Mammary epithelial cell (primary cell): ENCODE measurements at regions of chr20 and their contacts with region 1.

Region 1: GRCh38 chr20:23257848-23258746 is 92.5 kb upstream of the NXT1 start:
- DNase-seq: peak; percentile 78
- H3K4me3 ChIP-seq: no peak overlapping the region
- H3K27ac ChIP-seq: peak overlapping the region; percentile 3
- H3K4me1 ChIP-seq: peaks cover 22% of the 10 kb centered on the region
- H3K27me3 ChIP-seq: no peaks in the 10 kb centered on the region
- CTCF ChIP-seq: no peak

Region 2: GRCh38 chr20:23009636-23010035 is 248.5 kb before region 1 on chr20:
- CTCF ChIA-PET with region 1: no interaction called
- dilution Hi-C with region 1: no loop called
- in situ Hi-C with region 1: no loop called
- intact Hi-C with region 1: no loop called
- DNase-seq: peak; percentile 41
- H3K4me3 ChIP-seq: no peak overlapping the region
- H3K27ac ChIP-seq: no peak overlapping the region
- H3K4me1 ChIP-seq: peaks cover 13% of the 10 kb centered on the region
- H3K27me3 ChIP-seq: no peaks in the 10 kb centered on the region
- CTCF ChIP-seq: no peak

Region 3: DNA sequence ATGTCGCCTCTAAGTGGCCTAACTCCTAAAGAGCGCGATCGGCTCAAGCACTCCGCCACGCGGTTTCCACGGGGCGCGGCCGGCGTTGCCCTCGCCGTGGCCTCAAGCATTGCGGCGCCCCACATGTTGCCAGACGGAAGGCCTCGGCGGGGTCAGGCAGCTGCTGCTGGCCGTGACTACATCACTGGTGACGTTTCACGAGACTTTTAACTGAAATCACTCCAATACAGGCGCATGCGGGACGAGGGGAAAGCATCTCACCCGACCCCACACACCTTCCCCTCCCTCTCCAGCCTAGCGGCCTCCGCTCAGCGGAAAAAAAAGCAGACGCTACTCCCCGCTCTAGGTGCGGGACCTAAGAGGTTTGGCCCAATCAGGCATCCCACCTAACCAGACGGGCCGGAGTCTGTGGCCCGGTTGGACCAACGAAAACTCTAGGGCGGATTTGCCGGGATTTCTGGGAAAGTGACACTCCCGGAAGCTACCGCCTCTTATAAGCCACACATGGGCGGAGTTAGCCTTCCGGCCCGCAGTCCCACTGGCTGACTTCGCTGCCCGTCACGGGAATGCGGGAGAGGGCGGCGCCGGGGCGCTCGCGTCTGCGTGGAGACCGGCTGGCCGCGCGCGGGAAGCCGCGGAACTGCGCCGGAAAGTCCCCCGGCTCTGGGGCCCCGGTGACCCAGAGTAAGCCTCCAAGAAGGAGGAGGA is 92.3 kb after region 1 on chr20 and contains the start of gene NXT1:
- CTCF ChIA-PET with region 1: no interaction called
- dilution Hi-C with region 1: no loop called
- in situ Hi-C with region 1: no loop called
- intact Hi-C with region 1: loop called (anchors 10 kb)
- DNase-seq: peak; percentile 99
- H3K4me3 ChIP-seq: peak within 1 kb of the TSS; percentile 74 to 89 (median 78)
- H3K27ac ChIP-seq: peak within 1 kb of the TSS; percentile 81
- H3K4me1 ChIP-seq: peaks cover 13% of the 10 kb centered on the region
- H3K27me3 ChIP-seq: no peaks in the 10 kb centered on the region
- CTCF ChIP-seq: peak in 1 of 2 donors; percentile 0
- total RNA-seq, gene NXT1: 22.0 to 28.5 TPM